Naive thymus-derived CD4-positive, alpha-beta T cell (primary cell): ENCODE measurements at regions of chr19 and their contacts with region 1.

Region 1: GRCh38 chr19:36772311-36773222 is at the start of gene ZNF850:
- DNase-seq: peak; percentile 88 to 97 (median 94)
- ATAC-seq: peak; percentile 94
- H3K4me3 ChIP-seq: peak within 1 kb of the TSS; percentile 97
- H3K4me3 Mint-ChIP-seq: peak within 1 kb of the TSS; percentile 88 to 98 (median 96)
- H3K27ac ChIP-seq: peak within 1 kb of the TSS; percentile 87
- H3K27ac Mint-ChIP-seq: peak within 1 kb of the TSS; percentile 82 to 98 (median 92)
- H3K4me1 ChIP-seq: peaks cover 12 to 15% of the 10 kb centered on the region in 2 donors
- H3K4me1 Mint-ChIP-seq: peaks cover 21 to 26% (median 24%) of the 10 kb centered on the region in 7 donors
- H3K27me3 ChIP-seq: no peaks in the 10 kb centered on the region
- H3K27me3 Mint-ChIP-seq: no peaks in the 10 kb centered on the region
- total RNA-seq, gene ZNF850: 1.9 to 4.8 (median 4.3) TPM

Region 2: GRCh38 chr19:36418287-36419001 is 354.1 kb before region 1 on chr19 and contains the start of gene ZFP82:
- CTCF ChIA-PET with region 1: no interaction called
- POLR2A ChIA-PET with region 1: no interaction called
- intact Hi-C with region 1: loop called in 1 of 2 experiments (anchors 1 kb)
- DNase-seq: peak; percentile 47 to 83 (median 76)
- ATAC-seq: peak; percentile 94
- H3K4me3 ChIP-seq: peak within 1 kb of the TSS; percentile 82
- H3K4me3 Mint-ChIP-seq: peak within 1 kb of the TSS; percentile 89 to 96 (median 93)
- H3K27ac ChIP-seq: peak within 1 kb of the TSS; percentile 83
- H3K27ac Mint-ChIP-seq: peak within 1 kb of the TSS; percentile 82 to 95 (median 91)
- H3K4me1 ChIP-seq: peaks cover 6 to 13% of the 10 kb centered on the region in 2 donors
- H3K4me1 Mint-ChIP-seq: peaks cover 10 to 36% (median 21%) of the 10 kb centered on the region in 7 donors
- H3K27me3 ChIP-seq: peaks cover 0 to 9% of the 10 kb centered on the region in 2 donors
- H3K27me3 Mint-ChIP-seq: peaks cover 14 to 23% (median 22%) of the 10 kb centered on the region in 5 donors
- total RNA-seq, gene ZFP82: 2.2 to 8.2 (median 5.7) TPM

Region 3: DNA sequence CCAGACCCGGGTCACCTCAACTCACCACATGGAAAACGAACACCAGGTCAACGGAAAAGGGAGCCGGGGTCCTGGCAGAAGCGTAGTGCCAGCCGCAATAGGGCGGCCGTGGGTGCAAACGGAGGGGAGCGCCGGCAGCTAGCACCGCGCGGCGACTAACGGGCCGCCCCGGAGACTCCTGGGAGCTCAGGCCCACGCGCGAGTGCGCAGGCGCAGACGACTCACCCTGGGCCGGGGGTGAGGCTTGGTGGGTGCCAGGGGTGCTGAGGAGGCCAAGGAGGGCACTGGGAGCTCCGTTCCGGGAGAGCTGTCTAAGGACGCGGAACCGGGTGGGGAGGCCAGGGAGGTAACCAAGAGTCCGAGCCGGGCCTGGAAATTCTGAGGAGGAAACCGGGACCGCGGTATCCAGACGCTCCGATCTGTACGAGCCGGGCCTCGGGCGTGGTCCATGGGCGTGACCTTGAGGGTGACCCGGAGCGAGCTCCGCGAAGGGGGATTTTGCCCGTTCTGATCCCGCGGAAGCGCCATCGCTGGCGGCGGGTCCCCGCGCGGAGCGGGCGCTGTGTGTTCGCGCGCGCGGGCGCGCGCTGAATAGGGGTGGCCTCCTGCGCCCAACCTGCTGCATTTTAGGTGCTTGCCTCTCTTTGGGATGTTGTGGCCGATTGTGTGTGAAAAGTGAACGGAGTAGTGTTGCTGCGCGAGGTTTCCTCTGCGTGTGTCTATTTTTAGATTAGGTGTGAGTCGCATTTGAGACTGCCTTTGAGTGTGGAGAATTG is 167.3 kb before region 1 on chr19 and contains the start of gene ZNF382:
- CTCF ChIA-PET with region 1: no interaction called
- POLR2A ChIA-PET with region 1: interaction called, 4 read pairs
- intact Hi-C with region 1: loop called (anchors 2 to 5 kb)
- DNase-seq: peak; percentile 77 to 92 (median 86)
- ATAC-seq: peak; percentile 80
- H3K4me3 ChIP-seq: peak within 1 kb of the TSS; percentile 95
- H3K4me3 Mint-ChIP-seq: peak within 1 kb of the TSS; percentile 81 to 99 (median 93)
- H3K27ac ChIP-seq: peak within 1 kb of the TSS; percentile 84
- H3K27ac Mint-ChIP-seq: peak within 1 kb of the TSS; percentile 78 to 98 (median 93)
- H3K4me1 ChIP-seq: peaks cover 7 to 15% of the 10 kb centered on the region in 2 donors
- H3K4me1 Mint-ChIP-seq: peaks cover 20 to 32% (median 27%) of the 10 kb centered on the region in 7 donors
- H3K27me3 ChIP-seq: no peaks in the 10 kb centered on the region
- H3K27me3 Mint-ChIP-seq: no peaks in the 10 kb centered on the region
- total RNA-seq, gene ZNF382: 5.4 to 20.2 (median 12.2) TPM

Region 4: GRCh38 chr19:36837906-36838783 is 65.6 kb after region 1 on chr19 and contains the start of gene ZNF790:
- CTCF ChIA-PET with region 1: no interaction called
- POLR2A ChIA-PET with region 1: no interaction called
- intact Hi-C with region 1: loop called (anchors 1 kb)
- DNase-seq: peak; percentile 68 to 91 (median 85)
- ATAC-seq: peak; percentile 95
- H3K4me3 ChIP-seq: peak within 1 kb of the TSS; percentile 92
- H3K4me3 Mint-ChIP-seq: peak within 1 kb of the TSS in 1 of 10 donors; percentile 22
- H3K27ac ChIP-seq: peak within 1 kb of the TSS; percentile 92
- H3K27ac Mint-ChIP-seq: peak within 1 kb of the TSS in 5 of 9 donors; percentile 39 to 65 (median 51)
- H3K4me1 ChIP-seq: peaks cover 6 to 11% of the 10 kb centered on the region in 2 donors
- H3K4me1 Mint-ChIP-seq: peaks cover 0 to 21% (median 14%) of the 10 kb centered on the region in 7 donors
- H3K27me3 ChIP-seq: no peaks in the 10 kb centered on the region
- H3K27me3 Mint-ChIP-seq: no peaks in the 10 kb centered on the region
- total RNA-seq, gene ZNF790: 2.6 to 14.4 (median 7.3) TPM

Region 5: GRCh38 chr19:37077934-37078725 is 305.6 kb after region 1 on chr19 and contains the start of gene ZNF420:
- CTCF ChIA-PET with region 1: no interaction called
- POLR2A ChIA-PET with region 1: no interaction called
- intact Hi-C with region 1: loop called (anchors 1 kb)
- DNase-seq: peak; percentile 64 to 89 (median 84)
- ATAC-seq: peak; percentile 98
- H3K4me3 ChIP-seq: peak within 1 kb of the TSS; percentile 92
- H3K4me3 Mint-ChIP-seq: peak within 1 kb of the TSS; percentile 90 to 100 (median 96)
- H3K27ac ChIP-seq: peak within 1 kb of the TSS; percentile 82
- H3K27ac Mint-ChIP-seq: peak within 1 kb of the TSS; percentile 70 to 99 (median 94)
- H3K4me1 ChIP-seq: peaks cover 11 to 19% of the 10 kb centered on the region in 2 donors
- H3K4me1 Mint-ChIP-seq: peaks cover 16 to 43% (median 34%) of the 10 kb centered on the region in 7 donors
- H3K27me3 ChIP-seq: no peaks in the 10 kb centered on the region
- H3K27me3 Mint-ChIP-seq: no peaks in the 10 kb centered on the region
- total RNA-seq, gene ZNF420: 10.8 to 34.9 (median 15.9) TPM

Region 6: GRCh38 chr19:37370880-37371661 is 598.5 kb after region 1 on chr19 and contains the start of gene ZNF527:
- CTCF ChIA-PET with region 1: no interaction called
- POLR2A ChIA-PET with region 1: no interaction called
- intact Hi-C with region 1: loop called in 1 of 2 experiments (anchors 1 kb)
- DNase-seq: peak; percentile 92 to 97 (median 96)
- ATAC-seq: peak; percentile 96
- H3K4me3 ChIP-seq: peak within 1 kb of the TSS; percentile 85
- H3K4me3 Mint-ChIP-seq: peak within 1 kb of the TSS; percentile 92 to 100 (median 98)
- H3K27ac ChIP-seq: peak within 1 kb of the TSS; percentile 74
- H3K27ac Mint-ChIP-seq: peak within 1 kb of the TSS; percentile 87 to 99 (median 97)
- H3K4me1 ChIP-seq: peaks cover 0 to 8% of the 10 kb centered on the region in 2 donors
- H3K4me1 Mint-ChIP-seq: peaks cover 7 to 25% (median 17%) of the 10 kb centered on the region in 7 donors
- H3K27me3 ChIP-seq: no peaks in the 10 kb centered on the region
- H3K27me3 Mint-ChIP-seq: no peaks in the 10 kb centered on the region
- total RNA-seq, gene ZNF527: 5.6 to 13.6 (median 13.2) TPM